Ovary (tissue), 10 donors: ENCODE measurements at regions of chr21 and their contacts with region 1.

Region 1: DNA sequence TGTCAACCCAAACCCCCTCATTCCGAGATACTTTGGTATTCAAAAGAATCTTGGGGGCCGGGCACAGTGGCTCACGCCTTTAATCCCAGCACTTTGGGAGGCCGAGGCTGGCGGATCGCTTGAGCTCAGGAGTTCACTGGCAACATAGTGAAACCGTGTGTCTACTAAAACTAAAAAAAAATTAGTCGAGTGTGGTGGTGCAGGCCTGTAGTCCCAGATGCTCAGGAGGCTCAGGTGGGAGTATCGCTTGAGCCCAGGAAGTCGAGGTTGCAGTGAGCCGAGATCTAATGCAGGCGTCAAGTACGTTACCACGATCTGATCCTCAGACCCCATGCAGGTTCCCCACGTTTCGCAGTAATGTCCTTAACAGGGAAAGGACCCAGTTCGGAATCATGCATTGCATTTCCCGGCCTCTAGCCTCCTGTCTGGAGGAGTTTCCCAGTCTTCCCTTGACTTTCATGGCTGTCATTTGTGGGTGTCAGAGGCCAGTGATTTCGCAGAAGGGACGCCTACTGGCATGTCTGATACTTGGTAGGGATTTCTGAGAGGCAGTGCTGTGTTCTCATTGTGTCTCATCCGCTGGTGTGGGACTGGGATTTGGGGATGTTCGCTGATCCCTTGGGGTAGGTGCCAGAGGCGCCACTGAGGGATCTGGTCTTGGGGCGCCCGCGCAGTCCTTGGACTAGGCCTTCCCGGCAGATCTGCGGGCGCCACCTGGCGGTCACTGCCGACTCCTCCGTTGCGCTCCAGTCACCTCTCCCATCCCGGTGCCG is 39.3 kb upstream of the HMGN1 start:
- DNase-seq: peak; percentile 89 to 95 (median 93)
- H3K4me3 ChIP-seq: peak overlapping the region; percentile 34
- H3K27ac ChIP-seq: peak overlapping the region in 1 of 2 donors; percentile 4
- H3K4me1 ChIP-seq: peaks cover 3% of the 10 kb centered on the region
- H3K27me3 ChIP-seq: no peaks in the 10 kb centered on the region
- CTCF ChIP-seq: peak; percentile 82 to 94 (median 87)
- EP300 ChIP-seq: no peak
- POLR2A ChIP-seq: no peak

Region 2: DNA sequence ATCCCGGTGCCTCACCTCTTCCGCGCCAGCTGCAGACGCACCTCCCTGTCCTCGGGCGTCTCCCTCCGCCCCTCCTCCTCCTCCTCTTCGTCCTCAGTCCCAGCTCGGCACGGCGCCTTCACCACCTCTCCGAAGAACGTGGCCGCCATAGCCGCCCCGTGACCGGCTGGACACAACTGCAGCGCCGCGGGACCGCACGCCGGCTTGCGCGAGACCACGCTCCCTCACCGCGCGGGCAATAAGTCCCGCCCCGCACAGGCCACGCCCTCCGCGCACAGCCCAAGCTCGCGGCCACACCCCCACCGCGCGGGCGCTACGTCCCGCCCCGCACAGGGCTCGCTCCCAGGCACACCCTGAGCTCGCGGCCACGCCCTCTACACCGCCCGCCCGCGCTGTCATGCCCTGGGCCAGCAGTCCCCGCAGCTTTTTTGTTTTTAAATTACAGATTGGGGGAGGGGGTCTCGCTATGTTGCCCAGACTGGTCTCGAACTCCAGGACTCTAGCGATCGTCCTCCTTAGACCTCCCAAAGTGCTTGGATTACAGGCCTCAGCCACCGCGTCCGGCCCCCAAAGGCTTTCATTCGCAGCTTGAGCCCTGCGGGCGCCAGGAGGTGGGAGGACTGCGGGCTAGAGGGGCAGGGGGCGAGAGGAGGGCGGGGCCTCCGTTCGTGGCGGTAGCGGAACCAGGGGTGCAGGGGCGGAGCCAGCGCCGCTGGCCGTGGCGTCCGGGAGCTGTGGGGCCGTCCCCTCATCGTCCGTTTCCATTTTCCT is 204.8 kb before region 1 on chr21 and contains the start of gene PSMG1:
- intact Hi-C with region 1: loop called in 1 of 4 experiments (anchors 10 kb)
- DNase-seq: peak; percentile 90 to 97 (median 94)
- H3K4me3 ChIP-seq: peak within 1 kb of the TSS; percentile 91
- H3K27ac ChIP-seq: peak within 1 kb of the TSS; percentile 74 to 91
- H3K4me1 ChIP-seq: peaks cover 3% of the 10 kb centered on the region
- H3K27me3 ChIP-seq: no peaks in the 10 kb centered on the region
- CTCF ChIP-seq: no peak
- EP300 ChIP-seq: no peak
- POLR2A ChIP-seq: peak; percentile 47
- total RNA-seq, gene PSMG1: 16.2 to 42.7 (median 32.2) TPM

Region 3: DNA sequence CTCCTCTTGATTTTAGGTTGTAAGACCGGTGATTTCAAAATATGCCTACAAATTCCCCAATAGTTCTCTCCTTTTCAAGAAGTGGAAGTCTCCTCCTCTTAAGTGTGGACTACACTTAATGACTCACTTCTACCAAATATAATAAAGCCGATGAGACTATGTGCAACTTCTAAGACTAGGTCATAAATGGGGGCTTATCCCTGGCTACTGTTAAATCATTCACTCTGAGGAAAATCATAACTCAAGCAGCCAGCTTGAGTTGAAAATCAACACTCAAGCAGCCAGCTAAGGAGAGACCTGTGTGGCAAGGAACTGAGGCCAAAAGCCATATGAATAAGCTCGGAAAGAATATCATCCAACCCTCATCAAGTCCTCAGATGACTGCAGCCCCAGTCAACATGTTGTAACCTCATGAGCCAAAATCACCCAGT is 155.3 kb before region 1 on chr21:
- intact Hi-C with region 1: loop called in 1 of 4 experiments (anchors 10 kb)
- DNase-seq: no peak
- H3K4me3 ChIP-seq: no peak overlapping the region
- H3K27ac ChIP-seq: no peak overlapping the region
- H3K4me1 ChIP-seq: no peaks in the 10 kb centered on the region
- H3K27me3 ChIP-seq: no peaks in the 10 kb centered on the region
- CTCF ChIP-seq: no peak
- EP300 ChIP-seq: no peak
- POLR2A ChIP-seq: no peak

Region 4: DNA sequence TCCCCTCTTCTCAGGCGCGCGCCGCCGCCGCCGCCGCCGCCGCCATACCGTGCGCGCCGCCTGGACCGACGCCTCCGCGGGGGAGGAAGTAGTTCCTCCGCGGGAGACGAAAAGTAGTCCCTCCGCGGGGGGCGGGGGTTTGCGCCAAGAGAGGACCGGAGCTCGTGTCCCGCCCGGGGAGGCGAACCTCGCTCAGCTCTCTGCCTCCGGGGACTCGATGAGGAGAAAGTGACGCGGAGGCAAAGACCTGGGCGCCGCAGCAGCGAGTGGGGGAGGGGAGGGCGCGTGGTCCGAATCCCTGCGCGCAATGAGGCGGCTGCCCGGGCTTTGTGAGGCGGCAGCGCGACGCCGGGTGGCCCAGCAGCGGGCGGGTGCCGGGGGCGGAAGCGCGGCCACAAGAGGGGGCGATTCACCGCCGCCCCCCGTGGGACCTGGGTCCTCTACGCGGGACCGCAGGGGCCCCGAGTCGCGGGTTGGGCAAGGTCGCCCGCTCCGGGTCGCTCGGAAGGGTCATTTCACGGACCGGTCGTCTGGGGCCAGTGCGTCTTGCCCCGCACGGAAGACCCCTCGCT is 74.6 kb before region 1 on chr21 and contains the start of gene BRWD1:
- intact Hi-C with region 1: loop called in 3 of 4 experiments (anchors 5 to 10 kb)
- DNase-seq: peak; percentile 82 to 89 (median 87)
- H3K4me3 ChIP-seq: peak within 1 kb of the TSS; percentile 98
- H3K27ac ChIP-seq: peak within 1 kb of the TSS; percentile 94 to 98
- H3K4me1 ChIP-seq: peaks cover 3% of the 10 kb centered on the region
- H3K27me3 ChIP-seq: no peaks in the 10 kb centered on the region
- CTCF ChIP-seq: peak in 2 of 3 donors; percentile 30 to 38
- EP300 ChIP-seq: peak; percentile 46
- POLR2A ChIP-seq: peak; percentile 53
- total RNA-seq, gene BRWD1: 43.5 to 73.0 (median 51.2) TPM

Region 5: DNA sequence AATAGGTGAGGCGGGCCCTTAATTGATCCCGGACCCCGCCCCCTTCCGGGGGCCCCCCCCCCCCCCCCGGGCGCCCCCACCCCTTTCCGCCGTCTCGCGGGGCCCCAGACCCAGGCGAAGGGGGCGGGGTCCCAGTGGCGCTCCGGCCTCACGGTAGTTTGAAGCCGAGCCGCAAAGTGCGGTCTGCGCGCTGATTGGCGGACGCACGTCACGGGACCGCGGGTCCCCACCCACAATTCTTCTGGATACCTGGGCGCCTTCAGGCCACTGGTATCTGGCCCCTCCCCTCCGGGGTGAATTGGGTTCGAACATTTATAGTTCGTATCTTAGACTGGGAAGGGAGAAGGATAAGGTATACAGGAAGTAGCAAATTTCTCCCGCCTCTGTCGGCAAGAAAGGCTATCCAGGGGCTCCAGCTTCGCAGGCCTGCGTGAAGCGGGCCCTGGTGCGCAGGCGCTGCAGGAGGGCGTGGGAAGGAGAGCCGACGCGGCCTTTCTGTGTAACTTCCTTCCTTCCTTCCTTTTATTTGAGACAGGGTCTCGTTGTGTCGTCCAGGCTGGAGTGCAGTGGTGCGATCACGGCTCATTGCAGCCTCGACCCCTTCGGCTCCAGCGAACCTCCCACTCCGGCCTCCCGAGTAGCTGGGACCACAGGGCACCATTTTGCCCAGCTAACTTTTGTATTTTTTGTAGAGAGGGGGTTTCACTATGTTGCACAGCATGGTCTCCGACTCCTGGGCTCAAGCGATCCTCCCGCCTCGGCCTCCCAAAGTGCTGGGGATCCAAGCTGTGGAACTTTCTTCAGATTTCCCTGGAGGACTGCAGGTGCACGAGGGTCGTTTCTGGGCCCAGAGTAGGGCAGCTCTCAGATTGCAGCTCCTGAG is 38.8 kb before region 1 on chr21:
- intact Hi-C with region 1: loop called in 3 of 4 experiments (anchors 2 to 5 kb)
- DNase-seq: peak; percentile 94 to 98 (median 95)
- H3K4me3 ChIP-seq: peak overlapping the region; percentile 53
- H3K27ac ChIP-seq: peak overlapping the region; percentile 95
- H3K4me1 ChIP-seq: peaks cover 3% of the 10 kb centered on the region
- H3K27me3 ChIP-seq: no peaks in the 10 kb centered on the region
- CTCF ChIP-seq: no peak
- EP300 ChIP-seq: no peak
- POLR2A ChIP-seq: no peak